ENCODE measurements at regions of chr9 and their contacts with region 1.

Region 1: GRCh38 chr9:36400332-36401163 is 479 bp upstream of the RNF38 start:
- DNase-seq: peak; percentile 87
- H3K4me3 Mint-ChIP-seq: peak overlapping the region; percentile 94
- H3K27ac Mint-ChIP-seq: peak overlapping the region; percentile 97
- H3K4me1 Mint-ChIP-seq: peaks cover 34% of the 10 kb centered on the region
- H3K27me3 Mint-ChIP-seq: no peaks in the 10 kb centered on the region

Region 2: GRCh38 chr9:36190388-36191287 is 209.9 kb before region 1 on chr9 and contains the start of gene CLTA:
- intact Hi-C with region 1: loop called (anchors 2 kb)
- DNase-seq: peak; percentile 96
- H3K4me3 Mint-ChIP-seq: peak within 1 kb of the TSS; percentile 98
- H3K27ac Mint-ChIP-seq: peak within 1 kb of the TSS; percentile 74
- H3K4me1 Mint-ChIP-seq: peaks cover 47% of the 10 kb centered on the region
- H3K27me3 Mint-ChIP-seq: peaks cover 8% of the 10 kb centered on the region
- total RNA-seq, gene CLTA: 160 and 161 TPM in 2 replicates

Region 3: DNA sequence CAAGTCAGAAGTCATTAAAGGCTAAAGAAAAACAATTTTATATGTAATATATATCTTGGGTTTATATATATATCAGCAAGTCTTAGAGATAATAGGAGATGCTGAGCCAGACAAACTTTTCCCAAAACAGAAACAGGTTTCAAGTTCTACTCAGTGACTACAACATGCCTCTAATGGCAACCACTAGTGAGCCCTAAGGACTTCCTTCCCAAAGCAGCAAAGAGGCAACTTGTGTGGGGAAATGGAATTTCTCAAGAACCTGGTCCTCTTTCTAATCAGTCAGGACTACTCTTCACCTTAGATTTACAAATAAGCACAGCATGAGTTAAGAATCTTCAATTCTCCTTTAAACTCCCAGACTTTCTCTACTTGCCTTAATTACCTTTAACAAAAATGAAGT is 18.1 kb before region 1 on chr9:
- intact Hi-C with region 1: loop called (anchors 1 kb)
- DNase-seq: no peak
- H3K4me3 Mint-ChIP-seq: no peak overlapping the region
- H3K27ac Mint-ChIP-seq: no peak overlapping the region
- H3K4me1 Mint-ChIP-seq: peaks cover 46% of the 10 kb centered on the region
- H3K27me3 Mint-ChIP-seq: no peaks in the 10 kb centered on the region

Region 4: DNA sequence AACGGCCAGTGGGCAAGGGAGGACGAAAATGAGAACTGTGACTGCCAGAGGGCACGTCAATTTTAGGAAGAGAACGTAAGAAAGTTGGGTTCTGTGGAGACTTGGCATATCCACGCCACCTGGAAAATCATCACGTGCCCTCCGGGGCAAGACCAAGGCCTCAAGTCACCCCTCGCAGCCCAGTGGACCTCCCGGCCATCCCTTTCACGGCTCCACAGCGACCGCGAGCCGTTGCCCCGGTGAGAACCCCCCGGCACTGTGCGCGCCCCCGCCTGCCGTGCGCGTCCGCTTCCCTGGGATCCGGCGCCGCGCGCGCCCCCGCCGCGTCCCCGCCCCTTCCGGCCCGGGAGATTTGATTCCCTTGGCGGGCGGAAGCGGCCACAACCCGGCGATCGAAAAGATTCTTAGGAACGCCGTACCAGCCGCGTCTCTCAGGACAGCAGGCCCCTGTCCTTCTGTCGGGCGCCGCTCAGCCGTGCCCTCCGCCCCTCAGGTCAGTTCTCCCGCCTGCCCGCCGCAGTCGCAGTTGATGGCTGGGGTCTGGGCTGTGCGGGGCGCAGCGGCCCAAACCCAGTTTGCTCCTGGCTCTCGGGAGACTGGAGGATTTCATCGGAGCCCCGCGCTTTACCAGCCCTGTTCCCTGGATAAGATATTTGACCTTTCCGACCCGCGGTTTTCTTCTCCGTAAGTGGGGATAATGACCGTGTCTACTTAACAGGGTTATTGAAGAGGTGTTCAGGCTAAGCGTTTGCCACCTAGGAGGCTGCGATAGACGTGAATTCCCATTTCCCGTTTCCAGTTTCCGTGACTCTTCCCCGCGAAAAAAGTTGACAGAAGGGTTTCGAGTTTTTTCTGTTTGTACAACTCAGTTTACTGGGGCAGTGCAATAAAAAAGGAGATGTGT is 172.2 kb after region 1 on chr9 and contains the start of gene MELK:
- intact Hi-C with region 1: loop called (anchors 5 kb)
- DNase-seq: peak; percentile 82
- H3K4me3 Mint-ChIP-seq: peak within 1 kb of the TSS; percentile 97
- H3K27ac Mint-ChIP-seq: peak within 1 kb of the TSS; percentile 90
- H3K4me1 Mint-ChIP-seq: peaks cover 25% of the 10 kb centered on the region
- H3K27me3 Mint-ChIP-seq: peaks cover 5% of the 10 kb centered on the region
- total RNA-seq, gene MELK: 56.3 and 57.9 TPM in 2 replicates

Region 5: DNA sequence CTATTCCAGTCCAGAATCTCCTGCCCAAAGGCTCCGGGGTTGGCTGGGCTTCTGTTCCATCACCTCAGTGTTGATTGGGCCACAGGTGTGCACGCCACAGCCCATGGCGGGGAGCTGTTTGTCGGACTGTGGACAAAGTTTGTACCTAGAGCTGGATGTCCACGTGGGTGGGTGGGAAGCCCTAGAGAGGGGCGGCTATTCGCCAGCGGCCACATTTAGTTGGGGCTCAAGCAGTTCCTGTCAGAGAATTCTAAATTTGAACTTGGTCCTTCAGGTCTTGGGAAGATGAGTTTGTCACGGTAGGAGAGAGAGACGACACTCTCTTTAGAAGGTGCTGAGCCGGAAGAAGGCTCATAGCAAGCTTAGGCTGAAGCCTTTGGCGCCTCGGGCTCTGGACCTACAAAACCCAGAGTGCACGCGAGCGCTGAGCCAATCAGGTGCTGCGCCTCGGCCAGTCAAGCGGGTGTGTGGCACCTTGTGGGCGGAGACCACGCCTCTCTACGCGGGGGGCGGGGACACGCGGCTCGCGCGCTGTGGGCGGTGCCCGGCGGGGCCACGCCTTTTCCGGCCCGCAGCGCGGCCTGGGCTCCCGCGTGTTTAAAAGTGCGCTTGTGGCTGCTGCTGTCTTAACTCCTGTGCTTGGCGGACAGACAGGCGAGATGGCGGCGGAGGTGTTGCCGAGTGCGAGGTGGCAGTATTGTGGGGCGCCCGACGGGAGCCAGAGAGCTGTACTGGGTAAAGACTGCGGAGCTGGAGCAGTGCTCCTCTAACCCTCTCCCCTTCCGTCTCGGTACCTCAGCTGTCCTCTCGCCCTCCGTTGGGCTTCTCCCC is 1085.1 kb after region 1 on chr9 and contains the start of gene POLR1E:
- intact Hi-C with region 1: loop called (anchors 5 kb)
- DNase-seq: peak; percentile 95
- H3K4me3 Mint-ChIP-seq: peak within 1 kb of the TSS; percentile 100
- H3K27ac Mint-ChIP-seq: peak within 1 kb of the TSS; percentile 95
- H3K4me1 Mint-ChIP-seq: peaks cover 33% of the 10 kb centered on the region
- H3K27me3 Mint-ChIP-seq: peaks cover 5% of the 10 kb centered on the region
- total RNA-seq, gene POLR1E: 48.0 and 49.4 TPM in 2 replicates